ENCODE measurements at regions of chr2 and their contacts with region 1.

Region 1: GRCh38 chr2:177392373-177393202 is at the start of gene AGPS:
- DNase-seq: peak; percentile 38 to 94
- H3K4me3 ChIP-seq: peak within 1 kb of the TSS; percentile 84
- CTCF ChIP-seq: no peak
- POLR2A ChIP-seq: no peak
- total RNA-seq, gene AGPS: 14.1 to 29.8 (median 21.0) TPM

Region 2: GRCh38 chr2:177314194-177314593 is 78.4 kb before region 1 on chr2:
- intact Hi-C with region 1: no loop called
- DNase-seq: no peak
- H3K4me3 ChIP-seq: no peak overlapping the region
- CTCF ChIP-seq: no peak
- POLR2A ChIP-seq: no peak

Region 3: DNA sequence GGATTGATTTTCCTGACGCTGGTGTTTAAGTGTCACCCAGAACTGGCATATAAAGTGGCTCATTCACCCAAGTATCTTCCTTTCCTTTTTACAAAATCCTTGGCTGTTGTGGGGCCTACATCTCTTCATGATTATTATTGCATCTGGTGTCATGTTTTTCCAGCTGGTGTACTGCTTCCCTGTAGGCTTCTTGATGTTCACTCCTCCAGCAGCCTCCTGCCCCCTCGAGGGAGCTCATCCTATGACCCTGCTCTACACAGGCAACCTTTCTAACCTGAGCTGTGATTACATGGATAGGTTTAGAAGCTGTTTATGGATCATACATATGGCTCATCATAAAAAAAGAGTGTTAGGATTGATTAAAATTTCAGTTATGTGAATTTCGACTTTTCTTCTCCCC is 12.4 kb before region 1 on chr2:
- intact Hi-C with region 1: no loop called
- DNase-seq: no peak
- H3K4me3 ChIP-seq: no peak overlapping the region
- CTCF ChIP-seq: no peak
- POLR2A ChIP-seq: no peak

Region 4: GRCh38 chr2:177422271-177422670 is 29.7 kb after region 1 on chr2:
- intact Hi-C with region 1: no loop called
- DNase-seq: no peak
- H3K4me3 ChIP-seq: no peak overlapping the region
- CTCF ChIP-seq: no peak
- POLR2A ChIP-seq: no peak

Region 5: GRCh38 chr2:177538323-177538722 is 145.7 kb after region 1 on chr2:
- intact Hi-C with region 1: loop called (anchors 5 kb)
- DNase-seq: no peak
- H3K4me3 ChIP-seq: no peak overlapping the region
- CTCF ChIP-seq: no peak
- POLR2A ChIP-seq: no peak

Region 6: DNA sequence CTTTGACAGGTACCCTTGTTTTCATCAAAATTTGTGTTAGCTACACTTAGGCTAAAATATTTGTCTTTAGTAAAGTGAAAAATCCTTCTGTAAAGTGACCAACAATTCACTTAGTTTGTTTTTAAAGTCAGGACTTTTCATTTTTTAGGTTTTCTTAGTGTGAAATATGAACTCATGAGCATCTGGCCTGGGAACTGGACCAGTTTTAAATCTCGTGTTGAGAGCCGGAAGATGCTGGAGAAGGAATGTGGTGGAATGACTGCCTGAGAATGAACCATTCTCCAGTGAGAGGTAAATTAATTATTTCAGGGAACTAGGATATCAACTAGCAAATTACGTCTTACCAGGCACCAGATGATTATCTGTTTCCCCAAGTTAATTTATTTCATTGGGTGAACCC is 305.7 kb after region 1 on chr2:
- intact Hi-C with region 1: no loop called
- DNase-seq: no peak
- H3K4me3 ChIP-seq: no peak overlapping the region
- CTCF ChIP-seq: no peak
- POLR2A ChIP-seq: no peak